Panc1 (cell line): ENCODE measurements at regions of chr11 and their contacts with region 1.

Region 1: DNA sequence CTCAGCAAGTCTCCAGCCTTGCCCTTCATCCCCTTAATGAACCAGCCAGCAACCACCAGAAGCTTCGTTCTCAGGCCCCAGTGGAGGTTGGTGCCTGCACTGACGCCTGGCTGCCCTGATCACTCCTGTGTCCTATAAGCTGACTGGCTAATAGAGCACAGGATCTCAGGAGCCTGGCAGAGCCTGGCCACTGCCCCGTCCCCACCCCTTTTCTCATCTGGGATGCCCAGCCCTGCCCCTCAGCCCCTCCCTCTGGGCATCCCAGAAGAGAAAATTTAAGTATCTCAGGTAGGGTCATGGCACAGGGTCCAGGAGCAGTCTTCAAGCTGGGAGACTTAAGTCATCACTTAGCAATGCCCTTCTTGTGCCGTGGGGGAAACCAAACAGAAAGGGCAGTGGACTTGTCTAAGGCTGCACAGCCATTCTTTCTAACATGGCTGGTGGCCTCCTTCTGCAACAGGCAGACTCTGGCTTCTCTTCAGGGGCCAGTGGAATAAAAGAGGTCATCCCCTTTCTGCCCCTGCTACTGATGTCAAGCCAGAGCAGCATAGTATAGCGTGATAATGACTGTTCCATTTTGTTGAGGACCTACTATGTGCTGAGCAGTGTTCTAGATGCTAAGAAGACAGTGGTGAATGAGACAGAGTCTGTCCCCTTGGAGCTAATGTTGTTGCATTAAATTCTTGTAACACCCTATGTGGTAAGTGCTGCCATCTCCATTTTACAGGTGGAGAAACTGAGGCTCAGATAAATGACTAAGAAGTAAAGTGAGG is 15.5 kb upstream of the SYT7 start:
- DNase-seq: no peak
- ATAC-seq: no peak; the same call in 1 of the 2 replicates
- H3K4me3 ChIP-seq: no peak overlapping the region
- H3K27ac ChIP-seq: no peak overlapping the region
- H3K4me1 ChIP-seq: peaks cover 3% of the 10 kb centered on the region; the same call in 1 of the 2 replicates
- H3K27me3 ChIP-seq: no peaks in the 10 kb centered on the region
- CTCF ChIP-seq: no peak

Region 2: DNA sequence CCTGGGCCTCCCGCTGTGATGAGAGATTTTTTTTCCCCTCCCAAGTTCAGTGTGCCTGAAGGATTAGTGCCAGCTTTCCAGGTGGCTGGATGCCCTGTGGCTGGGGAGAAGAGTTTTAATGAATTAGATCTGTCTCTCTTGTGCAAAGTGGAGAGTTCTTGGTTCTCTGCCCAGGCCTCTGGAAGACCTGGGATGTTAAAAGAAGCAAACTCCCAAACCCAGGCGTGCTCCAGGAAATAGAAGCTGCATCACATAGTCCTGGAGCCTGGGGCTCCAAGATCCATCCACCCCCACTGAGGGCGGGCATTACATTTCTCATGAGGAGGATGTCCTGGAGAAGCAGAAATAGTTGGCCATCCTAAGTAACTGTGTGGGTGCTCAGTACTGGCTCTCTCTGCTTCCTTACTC is 135.9 kb before region 1 on chr11:
- CTCF ChIA-PET with region 1: no interaction called
- POLR2A ChIA-PET with region 1: no interaction called
- in situ Hi-C with region 1: no loop called
- intact Hi-C with region 1: no loop called
- DNase-seq: no peak
- ATAC-seq: no peak
- H3K4me3 ChIP-seq: no peak overlapping the region
- H3K27ac ChIP-seq: no peak overlapping the region
- H3K4me1 ChIP-seq: no peaks in the 10 kb centered on the region
- H3K27me3 ChIP-seq: no peaks in the 10 kb centered on the region
- CTCF ChIP-seq: no peak

Region 3: DNA sequence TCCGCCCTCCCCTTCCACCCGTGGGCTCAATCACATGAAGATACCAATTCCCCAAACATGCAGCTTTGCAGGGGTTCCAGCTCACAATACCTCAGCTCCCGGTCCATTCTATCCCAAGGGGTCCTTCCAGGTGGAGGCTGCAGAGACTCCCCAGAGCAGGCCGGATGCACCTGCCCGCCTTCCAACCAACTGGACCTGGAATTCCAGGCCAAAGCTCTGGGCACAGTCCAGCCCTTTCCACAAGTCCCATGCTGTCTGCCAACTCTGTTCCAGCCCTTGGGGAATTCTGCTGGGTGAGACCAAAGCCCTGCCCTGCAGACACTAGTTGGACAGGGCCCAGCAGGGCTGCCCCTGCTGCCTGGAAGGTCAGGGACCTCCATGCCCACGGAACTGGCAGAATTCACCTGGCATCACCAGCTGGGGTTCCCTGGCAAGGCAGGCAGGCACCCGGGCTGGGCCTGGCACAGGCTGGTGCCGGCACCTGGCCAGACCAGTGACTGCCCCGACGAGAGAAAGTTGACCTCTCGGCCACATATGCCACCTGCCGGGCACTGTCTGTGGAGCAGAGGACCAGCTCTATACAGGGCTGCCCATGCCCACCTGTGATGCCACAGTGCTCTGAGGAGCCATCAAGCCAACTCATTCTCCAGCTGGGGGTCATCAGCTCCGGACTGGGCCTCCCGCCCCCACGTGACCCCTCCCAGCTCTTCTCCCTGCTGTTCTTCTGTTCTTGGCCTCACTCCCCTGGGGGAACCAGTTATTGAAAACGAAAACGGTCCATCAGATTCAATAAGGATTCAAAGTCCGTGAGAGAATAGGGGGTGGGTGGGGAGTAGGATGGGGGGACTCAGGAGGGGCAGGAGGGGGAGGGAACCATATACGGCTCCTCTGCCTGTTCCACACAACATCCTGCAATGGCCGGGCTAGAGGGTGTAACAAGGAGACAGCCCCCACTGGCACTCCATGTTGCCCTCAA is 20.2 kb before region 1 on chr11:
- CTCF ChIA-PET with region 1: no interaction called
- POLR2A ChIA-PET with region 1: interaction called, 12 read pairs
- in situ Hi-C with region 1: no loop called
- intact Hi-C with region 1: no loop called
- DNase-seq: no peak
- ATAC-seq: no peak
- H3K4me3 ChIP-seq: no peak overlapping the region
- H3K27ac ChIP-seq: no peak overlapping the region
- H3K4me1 ChIP-seq: no peaks in the 10 kb centered on the region
- H3K27me3 ChIP-seq: peaks cover 4% of the 10 kb centered on the region; the same call in 1 of the 2 replicates
- CTCF ChIP-seq: no peak